ENCODE measurements at regions of chr15 and their contacts with region 1.

Region 1: GRCh38 chr15:34587717-34588674 is 4.5 kb upstream of the GOLGA8B start:
- DNase-seq: peak; percentile 89
- H3K4me3 Mint-ChIP-seq: peak overlapping the region; percentile 86
- H3K27ac Mint-ChIP-seq: peak overlapping the region; percentile 64
- H3K4me1 Mint-ChIP-seq: peaks cover 18% of the 10 kb centered on the region
- H3K27me3 Mint-ChIP-seq: peaks cover 24% of the 10 kb centered on the region

Region 2: DNA sequence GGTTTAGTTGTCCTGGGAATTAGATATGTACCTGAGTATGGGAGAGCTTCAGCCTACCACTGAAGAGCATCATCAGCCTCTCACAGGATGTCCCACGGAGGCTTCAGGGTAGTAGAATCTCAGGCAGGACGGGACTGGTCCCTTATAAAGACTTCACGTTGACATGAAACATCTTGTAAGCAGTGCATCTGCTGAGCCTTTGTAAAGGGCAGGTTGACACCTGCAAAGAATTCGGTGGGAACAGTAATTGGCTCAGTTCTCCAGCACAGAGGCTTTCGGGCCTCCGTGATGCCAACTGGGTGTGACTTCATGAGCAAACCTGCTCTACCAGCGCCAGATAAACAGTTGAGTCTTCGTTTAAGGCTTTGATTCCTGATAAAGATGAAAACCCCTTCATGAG is 522.1 kb before region 1 on chr15:
- intact Hi-C with region 1: loop called (anchors 10 kb)
- DNase-seq: no peak
- H3K4me3 Mint-ChIP-seq: no peak overlapping the region
- H3K27ac Mint-ChIP-seq: no peak overlapping the region
- H3K4me1 Mint-ChIP-seq: peaks cover 5% of the 10 kb centered on the region
- H3K27me3 Mint-ChIP-seq: peaks cover 1% of the 10 kb centered on the region